ENCODE measurements at regions of chr14 and their contacts with region 1.

Region 1: GRCh38 chr14:73458151-73458976 is at the start of gene NUMB:
- DNase-seq: peak; percentile 90 to 98
- ATAC-seq: peak; percentile 96 to 100 (median 97)
- H3K4me3 ChIP-seq: peak within 1 kb of the TSS; percentile 93
- H3K4me3 Mint-ChIP-seq: peak within 1 kb of the TSS; percentile 99
- H3K27ac ChIP-seq: peak within 1 kb of the TSS; percentile 53
- H3K27ac Mint-ChIP-seq: peak within 1 kb of the TSS; percentile 90 to 95
- H3K4me1 ChIP-seq: peaks cover 15% of the 10 kb centered on the region
- H3K4me1 Mint-ChIP-seq: peaks cover 38 to 43% of the 10 kb centered on the region in 2 donors
- H3K27me3 ChIP-seq: no peaks in the 10 kb centered on the region
- H3K27me3 Mint-ChIP-seq: peaks cover 6 to 7% of the 10 kb centered on the region in 2 donors
- CTCF ChIP-seq: no peak
- total RNA-seq, gene NUMB: 50.0 to 67.4 (median 56.3) TPM

Region 2: GRCh38 chr14:73269729-73270531 is 188.4 kb before region 1 on chr14:
- intact Hi-C with region 1: no loop called
- DNase-seq: no peak
- ATAC-seq: peak; percentile 70 to 80 (median 79)
- H3K4me3 ChIP-seq: peak overlapping the region; percentile 36
- H3K4me3 Mint-ChIP-seq: peak overlapping the region; percentile 92
- H3K27ac ChIP-seq: no peak overlapping the region
- H3K27ac Mint-ChIP-seq: peak overlapping the region; percentile 74 to 86
- H3K4me1 ChIP-seq: peaks cover 11% of the 10 kb centered on the region
- H3K4me1 Mint-ChIP-seq: peaks cover 20 to 23% of the 10 kb centered on the region in 2 donors
- H3K27me3 ChIP-seq: no peaks in the 10 kb centered on the region
- H3K27me3 Mint-ChIP-seq: peaks cover 0 to 4% of the 10 kb centered on the region in 2 donors
- CTCF ChIP-seq: no peak

Region 3: GRCh38 chr14:73283608-73284379 is 174.6 kb before region 1 on chr14:
- intact Hi-C with region 1: no loop called
- DNase-seq: no peak
- ATAC-seq: no peak
- H3K4me3 ChIP-seq: no peak overlapping the region
- H3K4me3 Mint-ChIP-seq: no peak overlapping the region
- H3K27ac ChIP-seq: no peak overlapping the region
- H3K27ac Mint-ChIP-seq: no peak overlapping the region
- H3K4me1 ChIP-seq: no peaks in the 10 kb centered on the region
- H3K4me1 Mint-ChIP-seq: peaks cover 6 to 13% of the 10 kb centered on the region in 2 donors
- H3K27me3 ChIP-seq: no peaks in the 10 kb centered on the region
- H3K27me3 Mint-ChIP-seq: no peaks in the 10 kb centered on the region
- CTCF ChIP-seq: no peak

Region 4: GRCh38 chr14:73491256-73492042 is 33.1 kb after region 1 on chr14:
- intact Hi-C with region 1: loop called (anchors 1 kb)
- DNase-seq: peak; percentile 76 to 84
- ATAC-seq: peak; percentile 76 to 81 (median 81)
- H3K4me3 ChIP-seq: peak overlapping the region; percentile 38
- H3K4me3 Mint-ChIP-seq: peak overlapping the region; percentile 92
- H3K27ac ChIP-seq: peak overlapping the region; percentile 84
- H3K27ac Mint-ChIP-seq: peak overlapping the region; percentile 86 to 88
- H3K4me1 ChIP-seq: peaks cover 24% of the 10 kb centered on the region
- H3K4me1 Mint-ChIP-seq: peaks cover 36 to 39% of the 10 kb centered on the region in 2 donors
- H3K27me3 ChIP-seq: no peaks in the 10 kb centered on the region
- H3K27me3 Mint-ChIP-seq: no peaks in the 10 kb centered on the region
- CTCF ChIP-seq: no peak

Region 5: DNA sequence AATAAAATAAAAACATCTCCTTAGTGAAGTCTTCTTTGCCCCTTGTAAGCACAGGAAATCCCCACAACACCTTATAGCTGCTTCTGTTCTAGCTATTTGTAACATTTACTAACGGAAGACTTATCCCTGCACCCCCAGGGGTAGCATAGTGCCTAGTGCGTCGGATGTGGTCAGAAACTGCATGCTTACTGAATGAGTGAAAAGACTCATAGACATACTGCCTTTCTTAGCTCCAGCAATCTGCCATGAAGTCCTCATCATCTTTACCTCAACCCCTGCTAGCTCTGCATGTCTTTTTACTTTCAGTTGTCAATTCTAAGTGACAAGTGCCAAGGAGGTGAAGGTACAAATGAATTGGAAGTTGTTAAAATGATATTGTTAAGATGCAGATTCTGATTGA is 45.3 kb after region 1 on chr14:
- intact Hi-C with region 1: no loop called
- DNase-seq: peak in 1 of 2 donors; percentile 38
- ATAC-seq: peak in 1 of 3 donors; percentile 35
- H3K4me3 ChIP-seq: no peak overlapping the region
- H3K4me3 Mint-ChIP-seq: no peak overlapping the region
- H3K27ac ChIP-seq: no peak overlapping the region
- H3K27ac Mint-ChIP-seq: no peak overlapping the region
- H3K4me1 ChIP-seq: no peaks in the 10 kb centered on the region
- H3K4me1 Mint-ChIP-seq: peaks cover 4 to 5% of the 10 kb centered on the region in 2 donors
- H3K27me3 ChIP-seq: no peaks in the 10 kb centered on the region
- H3K27me3 Mint-ChIP-seq: no peaks in the 10 kb centered on the region
- CTCF ChIP-seq: no peak

Measured in natural killer cell (primary cell).